ENCODE measurements at regions of chr6 and their contacts with region 1.

Region 1: GRCh38 chr6:34027445-34027936 is 118.4 kb downstream of the GRM4 start:
- DNase-seq: peak; percentile 60
- H3K4me3 ChIP-seq: no peak overlapping the region
- H3K27ac ChIP-seq: no peak overlapping the region
- H3K4me1 ChIP-seq: peaks cover 25% of the 10 kb centered on the region
- CTCF ChIP-seq: peak; percentile 80

Region 2: GRCh38 chr6:33771146-33772081 is 256.1 kb before region 1 on chr6:
- CTCF ChIA-PET with region 1: interaction called, 4 read pairs
- POLR2A ChIA-PET with region 1: no interaction called
- intact Hi-C with region 1: loop called (anchors 1 kb)
- DNase-seq: peak; percentile 70
- H3K4me3 ChIP-seq: no peak overlapping the region
- H3K27ac ChIP-seq: no peak overlapping the region
- H3K4me1 ChIP-seq: peaks cover 3% of the 10 kb centered on the region
- CTCF ChIP-seq: peak; percentile 91

Measured in OCI-LY7 (cell line).